Posterior cingulate gyrus (tissue), 11 donors: ENCODE measurements at regions of chr3 and their contacts with region 1.

Region 1: GRCh38 chr3:11514191-11514821 is 129.4 kb downstream of the VGLL4 start:
- DNase-seq: peak in 1 of 10 donors; percentile 67

Region 2: GRCh38 chr3:11385891-11386290 is 128.4 kb before region 1 on chr3:
- intact Hi-C with region 1: loop called (anchors 10 kb)
- DNase-seq: no peak

Region 3: DNA sequence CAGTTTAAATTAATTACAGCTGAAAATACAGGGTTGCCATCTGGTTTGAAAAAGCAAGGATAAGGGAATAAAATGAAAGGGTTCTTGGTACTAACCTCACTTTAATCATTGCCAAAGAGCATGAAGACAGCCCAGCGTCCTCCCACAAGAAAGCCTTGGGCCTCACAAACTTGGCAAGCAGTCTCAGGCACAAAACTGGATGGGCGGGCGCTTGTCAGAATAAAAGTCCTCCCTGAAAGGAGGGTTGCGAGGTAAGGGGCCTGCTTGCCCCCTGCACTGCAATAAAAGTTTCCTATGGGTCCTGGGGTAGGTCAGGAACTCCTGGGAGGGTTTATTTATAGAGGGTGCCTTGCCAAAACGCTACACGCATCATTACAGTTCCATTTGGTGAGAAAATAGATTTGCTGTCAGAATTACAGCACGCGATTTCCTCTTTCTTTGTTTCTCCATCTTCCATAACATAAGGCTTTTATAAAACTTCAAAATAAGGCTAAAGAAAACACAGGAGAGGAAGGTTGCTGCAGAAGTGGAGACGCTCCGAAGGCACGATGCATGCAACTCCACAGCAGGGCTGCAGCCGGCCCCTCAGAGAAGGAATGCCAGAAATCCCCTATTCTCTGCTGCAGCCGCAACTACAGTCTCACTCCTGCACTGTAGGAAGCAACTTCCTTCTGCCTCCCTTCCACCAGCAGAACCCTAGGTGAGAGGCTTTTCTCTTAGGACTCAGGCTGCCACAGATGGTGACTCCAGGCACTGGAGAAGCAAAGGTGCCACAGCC is 68.1 kb after region 1 on chr3:
- intact Hi-C with region 1: no loop called
- DNase-seq: peak; percentile 66 to 96 (median 75)

Region 4: DNA sequence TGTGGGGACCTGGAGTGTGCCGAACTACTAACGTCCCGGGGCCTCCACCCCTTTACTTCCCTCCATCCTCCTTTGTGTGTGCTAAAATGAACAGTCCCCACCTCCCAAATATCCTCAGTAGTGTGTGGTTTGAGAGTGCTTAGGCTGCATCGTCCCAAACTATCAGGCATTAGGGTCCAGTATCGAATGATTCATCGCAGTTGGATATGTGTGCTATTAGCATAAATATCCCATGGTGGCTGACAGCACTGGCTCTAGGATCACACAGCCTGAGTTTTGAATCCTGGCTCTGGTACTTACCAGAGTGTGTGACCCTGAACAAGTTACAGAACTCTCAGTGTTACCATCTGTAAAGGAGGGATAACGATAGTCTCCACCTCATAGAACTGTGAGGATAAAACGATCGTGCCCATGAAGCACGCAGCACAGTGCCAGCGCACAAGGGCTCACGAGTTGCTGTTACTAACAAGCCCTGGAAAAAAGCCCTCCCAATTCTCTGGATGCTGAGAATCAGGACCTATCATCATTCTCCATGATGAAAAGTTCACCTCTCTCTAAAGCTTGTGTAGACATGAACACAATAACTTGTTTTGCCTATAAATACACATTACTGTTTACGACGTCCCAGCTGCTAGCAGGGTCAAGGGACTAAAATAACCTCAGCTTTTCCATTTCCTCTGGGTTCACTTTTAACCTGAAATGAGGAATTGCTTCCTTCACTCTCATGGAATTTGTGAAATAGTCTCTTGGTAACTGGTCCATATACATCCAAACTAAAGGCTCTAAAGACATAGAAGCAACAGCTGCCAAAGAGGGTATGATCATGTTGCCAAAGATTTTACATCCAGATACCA is 78.4 kb after region 1 on chr3:
- intact Hi-C with region 1: no loop called
- DNase-seq: no peak